Posterior vena cava (tissue), 2 donors: ENCODE measurements at regions of chr5 and their contacts with region 1.

Region 1: DNA sequence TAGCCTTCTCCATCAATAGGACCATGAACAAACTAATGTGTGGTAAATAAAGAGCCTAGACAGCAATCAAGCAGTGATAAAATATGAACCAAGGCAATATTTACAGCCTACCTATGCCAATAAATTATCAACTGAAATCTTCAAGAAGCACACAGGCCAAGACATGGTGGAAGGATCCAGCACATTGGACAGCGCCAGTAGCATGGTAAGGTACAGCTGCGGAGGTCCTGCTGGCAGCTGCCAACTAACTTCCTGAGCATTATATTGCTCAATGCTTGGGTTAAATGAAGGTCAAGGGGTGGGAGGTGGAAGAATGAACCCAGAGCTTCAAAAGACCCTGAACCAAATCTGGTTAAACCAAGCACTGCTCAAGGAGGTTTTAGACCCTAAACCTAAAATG is 16.5 kb upstream of the SPDL1 start:
- DNase-seq: no peak

Region 2: GRCh38 chr5:168698991-168699401 is 868.1 kb before region 1 on chr5:
- intact Hi-C with region 1: loop called (anchors 10 kb)
- DNase-seq: peak; percentile 79